Activated naive CD4-positive, alpha-beta T cell treated with anti-CD3 and anti-CD28 coated beads for 36 hours (primary cell): ENCODE measurements at regions of chr2 and their contacts with region 1.

Region 1: DNA sequence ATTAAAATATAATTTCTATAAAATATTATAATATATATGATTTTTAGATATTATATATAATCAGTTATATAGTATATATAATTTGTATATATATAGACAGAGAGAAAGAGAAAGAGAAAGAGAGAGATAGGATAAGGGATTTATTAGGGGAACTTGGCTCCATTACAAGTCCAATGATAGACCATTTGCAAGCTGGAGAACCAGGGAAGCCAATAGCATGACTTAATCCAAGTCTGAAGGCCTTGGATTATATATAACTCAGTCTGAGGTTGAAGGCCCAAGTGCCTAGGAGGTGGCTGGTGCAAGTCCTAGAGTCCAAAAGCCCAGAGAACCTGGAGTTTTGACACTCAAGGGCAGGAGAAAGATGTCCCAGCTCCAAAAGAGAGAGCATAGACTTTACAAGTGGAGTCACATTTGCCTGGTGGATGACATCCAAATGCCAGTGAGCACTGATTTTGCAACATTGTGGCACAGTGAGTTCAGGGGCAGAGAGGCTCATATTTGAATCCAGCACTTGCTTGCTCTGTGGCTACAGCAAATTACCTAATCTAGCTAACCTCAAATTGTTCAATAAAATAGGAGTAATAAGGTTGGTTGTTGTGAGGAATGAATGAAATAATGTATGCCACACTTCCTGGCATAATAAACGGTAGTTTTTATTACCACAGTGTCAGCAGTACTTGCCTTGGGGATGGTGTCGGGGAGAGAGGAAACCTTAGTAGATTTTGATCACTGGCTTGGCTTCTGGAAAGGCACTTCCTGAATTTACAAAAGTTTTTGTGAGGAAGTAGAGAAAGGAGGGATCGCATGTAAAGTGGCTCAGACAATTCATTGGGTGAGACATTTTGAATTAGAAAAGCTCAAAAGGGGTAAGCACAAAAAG is 69.6 kb upstream of the CD28 start:
- DNase-seq: no peak
- H3K4me3 Mint-ChIP-seq: no peak overlapping the region
- H3K27ac Mint-ChIP-seq: no peak overlapping the region
- H3K4me1 Mint-ChIP-seq: peaks cover 19% of the 10 kb centered on the region
- H3K27me3 Mint-ChIP-seq: no peaks in the 10 kb centered on the region

Region 2: DNA sequence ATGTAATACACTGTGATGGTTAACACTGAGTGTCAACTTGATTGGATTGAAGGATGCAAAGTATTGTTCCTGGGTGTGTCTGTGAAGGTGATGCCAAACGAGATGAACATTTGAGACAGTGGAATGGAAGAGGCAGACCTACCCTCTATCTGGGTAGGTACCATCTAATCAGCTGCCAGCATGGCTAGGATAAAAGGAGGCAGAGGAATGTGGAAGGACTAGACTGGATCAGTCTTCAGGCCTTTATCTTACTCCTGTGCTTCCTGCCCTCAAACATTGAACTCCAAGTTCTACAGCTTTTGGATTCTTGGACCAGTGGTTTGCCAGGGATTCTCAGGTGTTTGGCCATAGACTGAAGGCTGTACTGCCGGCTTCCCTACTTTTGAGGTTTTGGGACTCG is 734.5 kb before region 1 on chr2:
- CTCF ChIA-PET with region 1: no interaction called
- intact Hi-C with region 1: no loop called
- DNase-seq: no peak
- H3K4me3 Mint-ChIP-seq: no peak overlapping the region
- H3K27ac Mint-ChIP-seq: no peak overlapping the region
- H3K4me1 Mint-ChIP-seq: peaks cover 9% of the 10 kb centered on the region
- H3K27me3 Mint-ChIP-seq: no peaks in the 10 kb centered on the region

Region 3: DNA sequence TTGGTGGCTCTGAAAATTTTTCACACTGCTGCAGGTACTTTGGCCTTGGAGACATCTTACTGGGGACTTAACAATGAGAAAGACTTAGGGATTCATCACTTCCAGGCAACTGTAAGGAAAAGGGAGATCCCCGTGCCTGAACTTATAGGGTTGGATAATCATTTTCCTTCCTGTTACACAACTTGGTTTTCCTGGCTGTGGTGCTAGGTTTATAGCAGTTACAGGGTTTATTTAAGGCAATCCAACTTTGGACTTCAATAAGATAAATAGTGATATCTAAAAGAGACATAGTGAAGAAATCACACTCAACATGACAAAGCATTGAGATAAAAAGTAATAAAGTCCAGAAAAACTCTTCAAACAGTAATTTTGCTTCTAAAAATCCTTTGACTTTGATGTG is 31.5 kb before region 1 on chr2:
- CTCF ChIA-PET with region 1: no interaction called
- intact Hi-C with region 1: loop called (anchors 2 kb)
- DNase-seq: no peak
- H3K4me3 Mint-ChIP-seq: no peak overlapping the region
- H3K27ac Mint-ChIP-seq: no peak overlapping the region
- H3K4me1 Mint-ChIP-seq: no peaks in the 10 kb centered on the region
- H3K27me3 Mint-ChIP-seq: no peaks in the 10 kb centered on the region